Activated naive CD4-positive, alpha-beta T cell treated with anti-CD3 and anti-CD28 coated beads for 36 hours (primary cell): ENCODE measurements at regions of chr4 and their contacts with region 1.

Region 1: GRCh38 chr4:13484122-13484748 is at the start of gene RAB28:
- DNase-seq: peak; percentile 92
- H3K4me3 Mint-ChIP-seq: peak within 1 kb of the TSS; percentile 89
- H3K27ac Mint-ChIP-seq: peak within 1 kb of the TSS; percentile 98
- H3K4me1 Mint-ChIP-seq: peaks cover 25% of the 10 kb centered on the region
- H3K27me3 Mint-ChIP-seq: peaks cover 3% of the 10 kb centered on the region
- total RNA-seq, gene RAB28: 15.6 to 16.7 TPM

Region 2: DNA sequence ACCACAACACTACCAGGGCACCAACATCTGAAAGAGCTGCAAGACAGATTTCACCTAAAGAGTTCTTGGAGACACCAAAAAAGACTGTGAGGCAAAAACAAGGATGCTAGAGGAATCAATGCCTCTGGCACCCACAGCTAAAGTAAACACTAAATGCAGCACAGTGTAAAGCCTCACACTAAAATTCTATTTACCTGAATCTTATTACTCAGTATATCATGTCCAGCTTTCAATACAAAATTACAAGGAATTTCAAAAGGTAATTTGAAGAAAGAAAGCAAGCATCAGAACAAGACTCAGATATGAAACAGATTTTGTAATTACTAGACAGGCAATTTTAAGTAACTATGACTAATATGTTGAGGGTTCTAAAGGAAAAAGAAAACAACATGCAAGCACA is 19.7 kb before region 1 on chr4:
- CTCF ChIA-PET with region 1: interaction called, 3 read pairs
- intact Hi-C with region 1: loop called (anchors 2 kb)
- DNase-seq: no peak
- H3K4me3 Mint-ChIP-seq: no peak overlapping the region
- H3K27ac Mint-ChIP-seq: no peak overlapping the region
- H3K4me1 Mint-ChIP-seq: peaks cover 33% of the 10 kb centered on the region
- H3K27me3 Mint-ChIP-seq: no peaks in the 10 kb centered on the region

Region 3: DNA sequence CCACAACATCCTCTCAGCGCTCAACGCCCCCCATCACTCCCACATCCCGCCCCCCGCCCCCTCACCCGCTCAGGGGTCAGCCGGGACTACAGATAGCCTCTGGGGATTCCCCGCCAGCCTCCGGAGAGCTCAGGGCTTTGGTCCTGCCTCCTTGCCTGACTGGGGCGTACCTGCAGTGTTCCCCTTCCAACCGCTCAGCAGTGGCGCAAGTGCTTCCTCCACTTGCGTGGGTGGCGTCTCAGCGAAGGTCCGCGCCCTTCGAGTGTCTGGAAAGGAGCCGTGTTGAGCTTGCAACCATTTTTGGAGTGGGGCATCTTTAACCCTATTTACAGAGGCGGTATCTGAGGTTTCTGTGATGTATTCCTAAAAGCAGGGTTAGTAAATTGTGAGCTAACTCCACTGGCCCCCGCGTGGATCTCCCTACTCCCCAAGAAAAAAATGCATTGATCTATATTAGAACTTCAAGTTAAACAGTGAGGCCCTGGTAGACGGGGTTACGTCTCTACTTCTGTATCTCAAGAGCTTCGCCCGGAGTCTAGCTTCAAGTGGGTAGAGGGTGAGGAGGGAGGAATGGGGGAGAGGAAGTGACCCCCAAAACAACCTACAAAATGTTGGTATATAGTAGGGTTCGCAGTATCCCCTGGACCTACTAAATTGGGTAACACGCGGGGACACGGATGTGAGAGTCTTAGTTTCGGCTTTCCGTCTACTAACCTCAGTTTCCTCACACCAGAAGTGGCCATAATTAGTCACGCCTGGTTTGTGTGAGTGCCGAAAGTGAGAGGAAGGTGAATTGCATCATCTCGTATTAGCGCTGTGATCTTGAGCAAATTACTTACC is 44.0 kb after region 1 on chr4:
- CTCF ChIA-PET with region 1: no interaction called
- intact Hi-C with region 1: loop called (anchors 1 kb)
- DNase-seq: peak; percentile 57
- H3K4me3 Mint-ChIP-seq: peak overlapping the region; percentile 43
- H3K27ac Mint-ChIP-seq: no peak overlapping the region
- H3K4me1 Mint-ChIP-seq: peaks cover 35% of the 10 kb centered on the region
- H3K27me3 Mint-ChIP-seq: peaks cover 85% of the 10 kb centered on the region

Region 4: GRCh38 chr4:13541720-13542576 is 57.7 kb after region 1 on chr4:
- CTCF ChIA-PET with region 1: no interaction called
- intact Hi-C with region 1: no loop called
- DNase-seq: peak; percentile 48
- H3K4me3 Mint-ChIP-seq: peak overlapping the region; percentile 42
- H3K27ac Mint-ChIP-seq: no peak overlapping the region
- H3K4me1 Mint-ChIP-seq: peaks cover 60% of the 10 kb centered on the region
- H3K27me3 Mint-ChIP-seq: peaks cover 81% of the 10 kb centered on the region

Region 5: GRCh38 chr4:13627606-13628301 is 143.5 kb after region 1 on chr4 and contains the start of gene BOD1L1:
- CTCF ChIA-PET with region 1: interaction called, 4 read pairs
- intact Hi-C with region 1: loop called (anchors 1 kb)
- DNase-seq: peak; percentile 84
- H3K4me3 Mint-ChIP-seq: peak within 1 kb of the TSS; percentile 95
- H3K27ac Mint-ChIP-seq: peak within 1 kb of the TSS; percentile 92
- H3K4me1 Mint-ChIP-seq: peaks cover 46% of the 10 kb centered on the region
- H3K27me3 Mint-ChIP-seq: no peaks in the 10 kb centered on the region
- total RNA-seq, gene BOD1L1: 24.2 to 24.3 TPM